Activated B cell treated with CpG ODN at 0.5 μM for 24 hours (primary cell): ENCODE measurements at regions of chr1 and their contacts with region 1.

Region 1: GRCh38 chr1:11838349-11839272 is 9.0 kb downstream of the NPPA start:
- DNase-seq: peak; percentile 66
- ATAC-seq: peak; percentile 92
- H3K4me3 Mint-ChIP-seq: no peak overlapping the region
- H3K27ac Mint-ChIP-seq: no peak overlapping the region
- H3K4me1 Mint-ChIP-seq: peaks cover 27% of the 10 kb centered on the region
- H3K27me3 Mint-ChIP-seq: no peaks in the 10 kb centered on the region
- CTCF ChIP-seq: peak; percentile 28

Region 2: GRCh38 chr1:11478571-11479374 is 359.8 kb before region 1 on chr1 and contains the start of gene DISP3:
- CTCF ChIA-PET with region 1: no interaction called
- POLR2A ChIA-PET with region 1: no interaction called
- intact Hi-C with region 1: loop called (anchors 10 kb)
- DNase-seq: peak; percentile 73
- ATAC-seq: peak; percentile 94
- H3K4me3 Mint-ChIP-seq: peak within 1 kb of the TSS; percentile 71
- H3K27ac Mint-ChIP-seq: no peak within 1 kb of the TSS
- H3K4me1 Mint-ChIP-seq: peaks cover 9% of the 10 kb centered on the region
- H3K27me3 Mint-ChIP-seq: peaks cover 49% of the 10 kb centered on the region
- CTCF ChIP-seq: no peak
- total RNA-seq, gene DISP3: 0.42 and 0.44 TPM in 2 replicates

Region 3: GRCh38 chr1:11784993-11785769 is 53.4 kb before region 1 on chr1:
- CTCF ChIA-PET with region 1: interaction called, 5 read pairs
- POLR2A ChIA-PET with region 1: no interaction called
- intact Hi-C with region 1: loop called (anchors 10 kb)
- DNase-seq: peak; percentile 55
- ATAC-seq: peak; percentile 86
- H3K4me3 Mint-ChIP-seq: peak overlapping the region; percentile 44
- H3K27ac Mint-ChIP-seq: peak overlapping the region; percentile 71
- H3K4me1 Mint-ChIP-seq: peaks cover 22% of the 10 kb centered on the region
- H3K27me3 Mint-ChIP-seq: no peaks in the 10 kb centered on the region
- CTCF ChIP-seq: peak; percentile 88

Region 4: DNA sequence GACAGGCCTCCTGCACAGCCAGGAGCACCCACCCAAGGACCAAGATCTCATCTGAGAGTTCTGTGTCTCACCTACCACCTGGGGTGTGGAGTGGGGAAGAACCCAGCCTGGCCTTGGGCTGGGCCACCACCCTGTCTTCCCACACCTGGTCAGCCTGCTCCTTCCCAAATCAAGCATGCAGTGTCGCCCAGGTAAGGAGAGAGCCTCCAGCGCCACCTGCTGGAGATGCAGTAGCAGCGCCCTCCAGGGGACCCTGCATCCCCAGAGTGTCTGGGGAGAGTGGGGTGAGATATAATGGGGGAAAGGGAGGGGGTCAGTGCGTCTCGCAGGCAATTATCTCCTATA is 55.3 kb after region 1 on chr1:
- CTCF ChIA-PET with region 1: interaction called, 19 read pairs
- POLR2A ChIA-PET with region 1: no interaction called
- intact Hi-C with region 1: loop called (anchors 1 kb)
- DNase-seq: peak; percentile 63
- ATAC-seq: peak; percentile 84
- H3K4me3 Mint-ChIP-seq: no peak overlapping the region
- H3K27ac Mint-ChIP-seq: no peak overlapping the region
- H3K4me1 Mint-ChIP-seq: no peaks in the 10 kb centered on the region
- H3K27me3 Mint-ChIP-seq: peaks cover 17% of the 10 kb centered on the region
- CTCF ChIP-seq: no peak

Region 5: GRCh38 chr1:11967028-11967547 is 128.5 kb after region 1 on chr1:
- CTCF ChIA-PET with region 1: interaction called, 14 read pairs
- POLR2A ChIA-PET with region 1: no interaction called
- intact Hi-C with region 1: loop called (anchors 1 kb)
- DNase-seq: no peak
- ATAC-seq: peak; percentile 75
- H3K4me3 Mint-ChIP-seq: no peak overlapping the region
- H3K27ac Mint-ChIP-seq: no peak overlapping the region
- H3K4me1 Mint-ChIP-seq: no peaks in the 10 kb centered on the region
- H3K27me3 Mint-ChIP-seq: no peaks in the 10 kb centered on the region
- CTCF ChIP-seq: no peak

Region 6: DNA sequence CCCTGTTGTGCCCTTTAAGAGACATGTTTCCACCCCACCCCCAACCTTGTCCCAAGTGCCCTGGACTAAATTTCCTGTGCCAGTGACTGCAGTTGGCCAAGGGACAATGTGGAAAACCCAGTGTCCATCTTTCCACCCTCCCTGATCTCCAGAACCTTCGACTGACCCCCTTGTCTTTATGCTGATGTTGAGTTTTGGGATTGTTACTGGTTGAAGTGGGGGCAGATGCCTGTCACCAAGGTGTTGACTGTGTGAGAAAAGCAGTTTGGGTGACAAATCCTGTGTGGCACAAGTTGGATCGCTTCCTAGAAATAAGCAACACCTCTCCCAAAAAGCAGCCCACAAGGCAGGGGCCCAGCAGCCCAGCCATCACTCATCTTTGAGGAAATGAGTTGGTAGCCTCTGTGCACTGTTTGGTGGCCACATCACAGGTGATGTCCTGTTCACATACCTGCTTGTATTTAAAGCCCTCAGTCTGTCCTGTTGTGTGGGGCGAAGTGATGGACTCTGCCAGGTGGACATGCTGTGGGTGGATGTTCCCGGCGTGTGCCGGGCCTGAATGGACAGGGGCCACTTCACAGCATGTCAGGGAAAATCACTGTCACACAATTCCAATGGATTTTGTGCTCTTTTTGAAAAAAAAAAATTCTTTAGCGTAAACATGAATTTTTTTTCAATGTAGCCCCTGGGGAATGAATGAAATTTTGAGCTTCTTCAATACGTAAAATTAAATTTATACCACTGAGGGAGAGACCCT is 174.1 kb after region 1 on chr1:
- CTCF ChIA-PET with region 1: no interaction called
- POLR2A ChIA-PET with region 1: no interaction called
- intact Hi-C with region 1: no loop called
- DNase-seq: no peak
- ATAC-seq: no peak
- H3K4me3 Mint-ChIP-seq: no peak overlapping the region
- H3K27ac Mint-ChIP-seq: no peak overlapping the region
- H3K4me1 Mint-ChIP-seq: peaks cover 3% of the 10 kb centered on the region
- H3K27me3 Mint-ChIP-seq: no peaks in the 10 kb centered on the region
- CTCF ChIP-seq: no peak